PC-3 (cell line): ENCODE measurements at regions of chr12 and their contacts with region 1.

Region 1: DNA sequence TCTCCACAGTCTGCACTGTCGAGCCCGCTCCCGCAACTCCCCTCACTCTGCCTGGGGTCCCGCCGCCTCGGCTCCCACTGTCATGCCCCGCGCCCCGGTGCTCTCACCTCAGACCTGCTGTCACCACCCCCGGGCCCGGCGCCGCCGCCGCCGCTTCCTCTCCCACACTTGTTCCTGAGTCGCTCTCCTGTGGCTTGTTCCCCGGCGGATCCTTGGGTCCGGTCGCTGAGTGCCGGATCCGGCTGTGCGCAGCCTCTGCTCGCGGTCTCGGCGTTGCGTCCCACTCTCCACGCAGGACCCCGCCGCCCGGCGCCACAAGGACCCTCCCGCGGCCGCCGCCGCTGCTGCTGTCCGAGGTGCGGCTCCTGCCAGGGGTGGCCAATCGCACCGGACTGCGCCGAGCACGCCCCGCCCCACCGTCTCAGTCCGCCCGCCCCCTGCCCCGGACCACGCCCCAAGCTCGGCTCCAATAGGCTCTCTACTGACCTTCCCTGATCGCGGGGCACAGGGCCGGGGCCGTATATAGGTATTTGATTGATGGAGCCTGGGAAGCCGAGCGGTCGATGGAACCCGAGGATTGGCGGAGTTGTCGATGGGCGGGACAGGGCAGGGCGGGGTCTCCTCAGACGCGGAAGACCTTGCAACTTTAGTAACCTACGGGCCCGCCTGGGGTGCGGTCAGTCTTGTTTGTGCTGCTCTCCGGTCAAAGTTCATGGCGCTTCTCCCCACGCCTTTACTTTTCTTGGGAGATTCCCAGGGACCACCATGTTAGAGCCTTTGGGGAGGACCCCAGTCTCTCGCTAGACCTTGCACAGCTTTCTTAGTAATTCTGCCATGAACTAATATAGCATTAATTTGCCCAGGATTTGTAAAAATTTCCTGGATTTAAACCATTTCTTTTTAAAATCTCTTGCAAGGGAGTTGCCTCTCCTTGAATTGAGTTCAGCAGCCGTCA is at the start of gene TAOK3:
- DNase-seq: peak; percentile 99
- ATAC-seq: peak; percentile 84
- H3K4me3 ChIP-seq: peak within 1 kb of the TSS; percentile 96
- H3K27ac ChIP-seq: peak within 1 kb of the TSS; percentile 47
- H3K4me1 ChIP-seq: peaks cover 29% of the 10 kb centered on the region
- H3K27me3 ChIP-seq: no peaks in the 10 kb centered on the region
- CTCF ChIP-seq: no peak
- total RNA-seq, gene TAOK3: 15.9 and 27.9 TPM in 2 replicates

Region 2: GRCh38 chr12:117874842-117875434 is 497.9 kb before region 1 on chr12:
- CTCF ChIA-PET with region 1: interaction called, 8 read pairs
- POLR2A ChIA-PET with region 1: no interaction called
- intact Hi-C with region 1: loop called (anchors 10 kb)
- DNase-seq: peak; percentile 87
- ATAC-seq: peak; percentile 90
- H3K4me3 ChIP-seq: no peak overlapping the region
- H3K27ac ChIP-seq: no peak overlapping the region
- H3K4me1 ChIP-seq: no peaks in the 10 kb centered on the region
- H3K27me3 ChIP-seq: no peaks in the 10 kb centered on the region
- CTCF ChIP-seq: peak; percentile 94

Region 3: DNA sequence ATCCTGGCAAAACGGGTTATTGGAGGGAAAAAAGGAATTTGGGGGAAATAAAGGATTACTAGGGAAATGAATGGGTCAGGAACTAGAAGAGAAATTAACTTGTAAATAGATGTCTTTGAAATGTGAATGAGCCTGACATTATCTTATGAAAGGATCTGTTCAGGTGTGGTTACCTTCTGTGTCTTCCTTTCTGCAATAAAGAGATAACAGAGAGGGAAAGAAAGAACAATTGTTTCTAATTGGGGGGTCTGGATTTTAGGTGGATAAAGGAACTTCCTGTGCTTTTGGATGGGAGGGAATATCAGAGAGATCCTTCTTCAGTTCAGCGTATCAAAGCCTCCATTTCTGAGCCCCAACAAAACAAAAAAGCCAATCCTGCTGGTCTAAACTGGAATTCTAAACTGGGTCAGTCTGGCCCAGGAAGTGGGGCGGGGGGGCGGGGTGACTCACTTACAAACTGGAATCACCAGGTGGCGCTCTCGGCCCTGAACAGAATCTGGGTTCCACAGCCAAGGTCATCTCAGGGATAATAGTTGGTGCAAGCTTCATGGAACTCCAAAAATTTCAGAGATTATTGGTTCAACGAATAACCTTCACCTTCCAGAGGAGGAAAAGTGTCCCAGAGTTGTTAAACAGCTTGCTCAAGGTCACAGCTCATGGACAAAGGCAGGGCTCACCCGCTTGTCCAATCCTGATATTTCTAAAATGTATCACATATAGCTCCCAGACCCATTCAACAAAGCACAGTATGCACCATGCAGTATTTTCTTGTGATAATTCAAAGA is 252.0 kb before region 1 on chr12:
- CTCF ChIA-PET with region 1: interaction called, 7 read pairs
- POLR2A ChIA-PET with region 1: interaction called, 5 read pairs
- intact Hi-C with region 1: loop called (anchors 1 kb)
- DNase-seq: peak; percentile 78
- ATAC-seq: peak; percentile 91
- H3K4me3 ChIP-seq: no peak overlapping the region
- H3K27ac ChIP-seq: no peak overlapping the region
- H3K4me1 ChIP-seq: peaks cover 8% of the 10 kb centered on the region; the same call in 1 of the 2 replicates
- H3K27me3 ChIP-seq: no peaks in the 10 kb centered on the region
- CTCF ChIP-seq: peak; percentile 52

Region 4: DNA sequence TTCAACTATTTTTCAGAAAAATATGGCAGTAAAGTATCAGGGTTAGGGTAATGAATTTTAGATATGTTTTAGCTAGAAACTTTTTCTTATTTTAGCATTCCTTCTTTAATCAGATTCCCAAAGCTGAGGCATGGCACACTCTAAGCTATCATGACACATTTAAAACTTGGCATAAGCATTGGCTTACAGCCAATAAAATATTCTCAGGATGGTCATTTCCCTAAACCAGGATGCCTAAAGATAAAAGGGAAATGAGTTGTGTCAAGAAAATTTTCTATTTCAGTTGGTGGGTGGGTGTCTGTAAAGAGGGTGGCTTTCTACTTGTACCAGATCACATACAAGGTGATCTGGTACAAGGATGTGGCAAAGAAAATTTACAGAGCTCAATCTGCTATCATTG is 189.1 kb before region 1 on chr12:
- CTCF ChIA-PET with region 1: interaction called, 24 read pairs
- POLR2A ChIA-PET with region 1: no interaction called
- intact Hi-C with region 1: loop called (anchors 1 kb)
- DNase-seq: peak; percentile 30
- ATAC-seq: no peak
- H3K4me3 ChIP-seq: no peak overlapping the region
- H3K27ac ChIP-seq: no peak overlapping the region
- H3K4me1 ChIP-seq: peaks cover 8% of the 10 kb centered on the region; the same call in 1 of the 2 replicates
- H3K27me3 ChIP-seq: no peaks in the 10 kb centered on the region
- CTCF ChIP-seq: no peak

Region 5: GRCh38 chr12:118404876-118405521 is 32.2 kb after region 1 on chr12:
- CTCF ChIA-PET with region 1: interaction called, 25 read pairs
- POLR2A ChIA-PET with region 1: no interaction called
- intact Hi-C with region 1: no loop called
- DNase-seq: peak; percentile 85
- ATAC-seq: peak; percentile 83
- H3K4me3 ChIP-seq: no peak overlapping the region
- H3K27ac ChIP-seq: no peak overlapping the region
- H3K4me1 ChIP-seq: no peaks in the 10 kb centered on the region
- H3K27me3 ChIP-seq: no peaks in the 10 kb centered on the region
- CTCF ChIP-seq: peak; percentile 97